ENCODE measurements at regions of chr20 and their contacts with region 1.

Region 1: GRCh38 chr20:53238121-53238660 is 266.0 kb downstream of the TSHZ2 start:
- DNase-seq: no peak
- ATAC-seq: no peak
- H3K4me3 ChIP-seq: no peak overlapping the region
- H3K27ac ChIP-seq: no peak overlapping the region
- H3K4me1 ChIP-seq: no peaks in the 10 kb centered on the region
- H3K27me3 ChIP-seq: peaks cover 0 to under 1% of the 10 kb centered on the region in 2 experiments; a peak in 1 of 5 replicates
- CTCF ChIP-seq: no peak
- EP300 ChIP-seq: no peak
- POLR2A ChIP-seq: no peak
- RAD21 ChIP-seq: no peak

Region 2: DNA sequence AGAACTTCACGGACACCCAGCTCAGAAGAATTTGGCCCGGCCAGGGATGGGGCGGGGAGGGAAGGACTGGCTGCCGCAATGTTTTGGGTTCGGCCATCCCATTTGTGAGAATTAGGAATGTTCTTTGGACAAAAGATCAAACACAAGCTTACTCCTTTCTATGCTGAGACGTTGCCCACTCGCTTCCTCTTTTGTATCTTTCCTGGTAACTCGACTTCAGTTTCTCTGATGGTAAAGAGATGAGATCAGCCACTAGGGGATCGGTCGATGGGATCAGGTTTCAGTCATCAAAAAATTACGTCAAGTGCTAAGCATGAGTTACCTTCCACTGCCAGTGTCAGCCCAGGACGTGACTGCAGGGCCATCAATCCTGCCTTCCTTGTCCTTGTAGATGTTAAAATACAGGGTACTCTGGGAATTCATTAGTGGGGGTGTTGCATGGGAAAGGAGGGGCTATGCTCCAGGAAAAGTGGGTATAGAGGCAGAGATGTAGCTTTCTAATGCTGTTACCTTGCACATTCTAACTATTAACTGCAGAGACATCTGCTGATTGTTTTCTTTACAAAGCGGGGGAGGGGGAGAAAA is 75.8 kb before region 1 on chr20:
- CTCF ChIA-PET with region 1: no interaction called
- POLR2A ChIA-PET with region 1: no interaction called
- in situ Hi-C with region 1: no loop called
- intact Hi-C with region 1: no loop called
- DNase-seq: peak; percentile 40 to 84 (median 64)
- ATAC-seq: peak; percentile 96
- H3K4me3 ChIP-seq: peak overlapping the region; percentile 9; the same call in 1 of the 2 replicates
- H3K27ac ChIP-seq: peak overlapping the region; percentile 80
- H3K4me1 ChIP-seq: peaks cover 14 to 22% of the 10 kb centered on the region in 2 experiments
- H3K27me3 ChIP-seq: no peaks in the 10 kb centered on the region
- CTCF ChIP-seq: peak; percentile 29 to 57 (median 49); a peak in 4 of 6 replicates
- EP300 ChIP-seq: peak; percentile 48; the same call in 1 of the 2 replicates
- POLR2A ChIP-seq: no peak
- RAD21 ChIP-seq: no peak

Region 3: GRCh38 chr20:53336778-53337291 is 98.6 kb after region 1 on chr20:
- CTCF ChIA-PET with region 1: no interaction called
- POLR2A ChIA-PET with region 1: no interaction called
- in situ Hi-C with region 1: no loop called
- intact Hi-C with region 1: no loop called
- DNase-seq: no peak
- ATAC-seq: peak; percentile 71
- H3K4me3 ChIP-seq: no peak overlapping the region
- H3K27ac ChIP-seq: no peak overlapping the region
- H3K4me1 ChIP-seq: peaks cover 6 to 16% of the 10 kb centered on the region in 2 experiments
- H3K27me3 ChIP-seq: peaks cover 0 to 7% of the 10 kb centered on the region in 2 experiments; a peak in 1 of 5 replicates
- CTCF ChIP-seq: peak; percentile 33 to 48 (median 37); a peak in 4 of 6 replicates
- EP300 ChIP-seq: no peak
- POLR2A ChIP-seq: no peak
- RAD21 ChIP-seq: peak; percentile 20 to 54; a peak in 2 of 4 replicates

Region 4: GRCh38 chr20:53413186-53413631 is 175.0 kb after region 1 on chr20:
- CTCF ChIA-PET with region 1: no interaction called
- POLR2A ChIA-PET with region 1: no interaction called
- in situ Hi-C with region 1: no loop called
- intact Hi-C with region 1: loop called (anchors 10 kb)
- DNase-seq: peak; percentile 61 to 67 (median 62)
- ATAC-seq: peak; percentile 88
- H3K4me3 ChIP-seq: no peak overlapping the region
- H3K27ac ChIP-seq: no peak overlapping the region
- H3K4me1 ChIP-seq: no peaks in the 10 kb centered on the region; a peak in 2 of 5 replicates
- H3K27me3 ChIP-seq: peaks cover 0 to 5% of the 10 kb centered on the region in 2 experiments; a peak in 4 of 5 replicates
- CTCF ChIP-seq: peak; percentile 77 to 91 (median 85)
- EP300 ChIP-seq: no peak
- POLR2A ChIP-seq: no peak
- RAD21 ChIP-seq: peak; percentile 66 to 83